Psoas muscle (tissue), 8 donors: ENCODE measurements at regions of chr3 and their contacts with region 1.

Region 1: GRCh38 chr3:160665784-160666526 is 11.0 kb upstream of the ARL14 start:
- DNase-seq: no peak
- ATAC-seq: peak in 1 of 4 donors; percentile 44
- H3K4me3 ChIP-seq: no peak overlapping the region
- H3K27ac ChIP-seq: no peak overlapping the region
- H3K4me1 ChIP-seq: peaks cover 9% of the 10 kb centered on the region
- H3K27me3 ChIP-seq: no peaks in the 10 kb centered on the region
- CTCF ChIP-seq: no peak

Region 2: DNA sequence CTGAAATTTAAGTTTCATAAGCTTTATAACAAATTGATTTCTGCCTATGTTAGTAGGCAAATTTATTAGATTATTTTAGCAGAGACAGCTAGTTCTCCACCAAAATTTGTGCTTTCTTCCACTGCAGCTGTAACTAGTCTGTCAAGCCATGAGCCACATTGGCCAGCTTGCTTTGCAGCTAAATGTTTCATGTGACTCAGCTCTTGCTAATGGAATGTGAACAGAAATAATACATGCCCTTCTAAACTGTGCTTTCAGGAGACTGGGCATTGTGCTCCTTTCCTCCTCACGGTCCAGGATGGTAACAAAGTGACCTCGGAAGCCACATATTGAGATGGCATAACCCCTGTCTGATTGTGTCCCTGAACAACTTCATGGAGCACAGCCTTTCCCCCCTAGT is 49.2 kb before region 1 on chr3:
- intact Hi-C with region 1: loop called in 1 of 2 experiments (anchors 10 kb)
- DNase-seq: no peak
- ATAC-seq: peak; percentile 90 to 98 (median 94)
- H3K4me3 ChIP-seq: no peak overlapping the region
- H3K27ac ChIP-seq: peak overlapping the region; percentile 66
- H3K4me1 ChIP-seq: peaks cover 23% of the 10 kb centered on the region
- H3K27me3 ChIP-seq: no peaks in the 10 kb centered on the region
- CTCF ChIP-seq: no peak

Region 3: GRCh38 chr3:161531930-161532329 is 866.0 kb after region 1 on chr3:
- intact Hi-C with region 1: no loop called
- DNase-seq: no peak
- ATAC-seq: no peak
- H3K4me3 ChIP-seq: no peak overlapping the region
- H3K27ac ChIP-seq: no peak overlapping the region
- H3K4me1 ChIP-seq: no peaks in the 10 kb centered on the region
- H3K27me3 ChIP-seq: no peaks in the 10 kb centered on the region
- CTCF ChIP-seq: no peak